GM13976 (cell line): ENCODE measurements at regions of chr7 and their contacts with region 1.

Region 1: GRCh38 chr7:5665094-5666025 is 116.1 kb downstream of the RNF216 start:
- DNase-seq: peak; percentile 78
- CTCF ChIP-seq: peak; percentile 63

Region 2: GRCh38 chr7:5494683-5495561 is 170.4 kb before region 1 on chr7:
- in situ Hi-C with region 1: loop called (anchors 10 kb)
- DNase-seq: peak; percentile 90
- CTCF ChIP-seq: peak; percentile 92